Posterior vena cava (tissue), 2 donors: ENCODE measurements at regions of chrX and their contacts with region 1.

Region 1: DNA sequence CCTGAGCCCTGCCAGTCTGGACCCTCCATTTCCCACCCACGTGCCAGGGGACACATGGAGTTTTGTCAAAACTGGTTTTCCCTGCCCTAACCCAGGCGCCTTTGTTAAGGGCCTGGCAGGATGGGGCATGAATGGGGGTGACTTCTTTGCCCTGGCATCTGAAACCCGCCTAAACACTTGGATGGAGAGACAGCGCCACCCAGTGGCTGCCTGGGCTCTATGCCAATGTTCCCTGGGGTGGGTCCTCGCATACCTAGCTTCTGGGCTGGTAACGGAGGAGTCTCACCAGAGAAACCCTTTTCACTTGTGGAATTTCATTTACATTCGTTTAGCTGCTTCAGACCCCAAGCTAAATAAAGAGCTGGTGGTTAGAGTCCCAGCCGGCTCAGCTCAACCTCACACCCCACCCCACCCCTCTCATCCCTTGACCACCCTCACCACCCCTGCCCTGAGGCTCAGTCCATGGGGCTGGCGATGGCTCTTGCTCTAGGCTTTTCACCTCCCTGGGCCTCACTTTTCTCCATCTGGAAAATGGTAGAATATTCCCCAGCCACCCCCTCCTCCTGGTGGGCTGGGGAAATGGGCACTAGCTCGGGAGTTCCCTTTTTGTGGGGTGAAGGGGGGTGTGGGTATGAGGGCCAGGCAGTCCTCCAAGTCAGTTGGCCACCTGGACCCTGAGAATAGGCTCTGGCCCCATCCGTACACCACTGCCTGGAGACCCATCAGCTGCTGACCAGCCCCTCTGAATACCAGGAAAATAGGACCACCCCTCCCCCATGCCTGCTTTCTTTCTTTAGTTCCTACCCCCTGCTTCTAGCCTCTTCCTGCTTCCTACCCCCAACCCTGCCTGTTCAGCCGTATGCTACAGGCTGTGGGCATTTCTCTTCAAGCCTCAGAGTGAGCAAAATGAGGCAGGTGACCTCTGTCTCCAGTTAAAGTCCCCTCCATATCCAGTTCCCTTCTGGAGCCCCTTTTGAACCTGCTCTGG is 57.1 kb upstream of the PJA1 start:
- DNase-seq: peak; percentile 88

Region 2: DNA sequence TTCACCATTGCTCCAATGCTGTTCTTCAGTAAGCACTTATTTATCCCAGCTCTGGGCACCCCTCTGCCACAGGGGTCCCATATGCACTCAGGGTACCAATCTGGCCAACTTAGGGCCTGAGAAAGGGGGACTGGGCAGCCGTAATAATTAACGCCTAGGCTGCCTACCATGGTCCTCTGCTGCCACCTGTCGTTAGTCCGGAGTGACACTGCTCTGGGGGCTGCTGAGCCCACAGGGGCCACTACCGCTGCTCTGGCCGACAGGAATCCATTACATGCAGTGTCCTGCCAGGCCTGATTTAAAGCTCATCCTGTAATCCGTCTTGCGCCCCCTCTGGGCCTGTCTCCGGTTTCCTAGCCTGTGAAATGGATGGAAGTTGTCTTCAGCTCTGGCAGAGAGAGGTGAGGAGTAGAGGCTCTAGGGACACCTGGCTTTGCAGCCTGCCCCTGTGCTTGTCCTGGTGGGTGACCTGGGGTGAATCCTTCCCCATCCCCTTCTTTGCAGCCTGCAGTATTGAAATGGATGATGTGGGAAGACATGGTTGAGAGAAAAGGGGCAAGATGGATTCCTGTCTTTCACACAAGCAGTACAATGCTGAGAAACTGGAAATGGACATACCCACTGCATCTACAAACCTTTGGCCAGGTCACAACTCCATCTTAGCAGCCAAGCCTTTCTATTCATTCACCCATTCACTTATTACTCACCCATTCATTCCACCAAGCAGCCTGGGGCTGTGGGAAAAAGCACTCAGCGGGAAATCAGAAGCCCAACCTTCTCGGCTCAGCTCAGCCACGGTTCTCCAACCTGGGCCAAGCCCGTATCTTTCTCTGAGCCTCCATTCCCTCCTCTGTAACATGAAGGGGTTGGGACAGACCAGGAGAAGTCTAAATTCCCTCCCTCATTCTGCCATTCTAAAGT is 165.4 kb after region 1 on chrX:
- intact Hi-C with region 1: loop called in 1 of 2 experiments (anchors 10 kb)
- DNase-seq: no peak